PC-9 (cell line): ENCODE measurements at regions of chr14 and their contacts with region 1.

Region 1: GRCh38 chr14:44594986-44595385 is 87.9 kb upstream of the FSCB start:
- DNase-seq: no peak
- H3K4me3 ChIP-seq: no peak overlapping the region
- H3K27ac ChIP-seq: no peak overlapping the region
- H3K4me1 ChIP-seq: no peaks in the 10 kb centered on the region
- H3K27me3 ChIP-seq: no peaks in the 10 kb centered on the region
- CTCF ChIP-seq: no peak

Region 2: DNA sequence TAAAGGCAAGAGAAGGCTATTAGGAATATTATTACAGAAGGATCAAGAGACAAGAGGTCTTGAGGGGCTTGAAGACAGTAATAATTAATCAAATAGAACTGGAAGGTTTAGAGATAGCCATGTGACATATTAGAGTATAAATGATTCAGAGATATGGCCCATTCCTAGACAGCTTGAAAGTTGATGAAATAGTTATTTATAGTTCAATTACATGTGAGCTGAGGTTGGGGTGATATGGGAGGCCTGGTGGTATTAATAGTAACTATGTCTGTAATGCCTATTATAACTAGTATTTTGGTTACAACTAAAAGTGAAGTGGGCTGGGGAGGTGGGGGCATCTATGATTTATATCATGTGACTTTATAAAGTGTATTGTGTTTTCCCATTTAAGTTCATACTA is 672.1 kb after region 1 on chr14:
- CTCF ChIA-PET with region 1: interaction called, 16 read pairs
- POLR2A ChIA-PET with region 1: no interaction called
- intact Hi-C with region 1: no loop called
- DNase-seq: no peak
- H3K4me3 ChIP-seq: no peak overlapping the region
- H3K27ac ChIP-seq: no peak overlapping the region
- H3K4me1 ChIP-seq: no peaks in the 10 kb centered on the region
- H3K27me3 ChIP-seq: no peaks in the 10 kb centered on the region
- CTCF ChIP-seq: no peak